ENCODE measurements at regions of chr22 and their contacts with region 1.

Region 1: GRCh38 chr22:24555157-24556039 is at the start of gene SNRPD3:
- DNase-seq: peak; percentile 99 to 100
- H3K4me3 ChIP-seq: peak within 1 kb of the TSS; percentile 81 to 93
- H3K27ac ChIP-seq: peak within 1 kb of the TSS; percentile 98 to 99
- H3K4me1 ChIP-seq: peaks cover 20 to 32% of the 10 kb centered on the region in 2 donors
- H3K27me3 ChIP-seq: no peaks in the 10 kb centered on the region
- CTCF ChIP-seq: no peak
- total RNA-seq, gene SNRPD3: 113 TPM

Region 2: DNA sequence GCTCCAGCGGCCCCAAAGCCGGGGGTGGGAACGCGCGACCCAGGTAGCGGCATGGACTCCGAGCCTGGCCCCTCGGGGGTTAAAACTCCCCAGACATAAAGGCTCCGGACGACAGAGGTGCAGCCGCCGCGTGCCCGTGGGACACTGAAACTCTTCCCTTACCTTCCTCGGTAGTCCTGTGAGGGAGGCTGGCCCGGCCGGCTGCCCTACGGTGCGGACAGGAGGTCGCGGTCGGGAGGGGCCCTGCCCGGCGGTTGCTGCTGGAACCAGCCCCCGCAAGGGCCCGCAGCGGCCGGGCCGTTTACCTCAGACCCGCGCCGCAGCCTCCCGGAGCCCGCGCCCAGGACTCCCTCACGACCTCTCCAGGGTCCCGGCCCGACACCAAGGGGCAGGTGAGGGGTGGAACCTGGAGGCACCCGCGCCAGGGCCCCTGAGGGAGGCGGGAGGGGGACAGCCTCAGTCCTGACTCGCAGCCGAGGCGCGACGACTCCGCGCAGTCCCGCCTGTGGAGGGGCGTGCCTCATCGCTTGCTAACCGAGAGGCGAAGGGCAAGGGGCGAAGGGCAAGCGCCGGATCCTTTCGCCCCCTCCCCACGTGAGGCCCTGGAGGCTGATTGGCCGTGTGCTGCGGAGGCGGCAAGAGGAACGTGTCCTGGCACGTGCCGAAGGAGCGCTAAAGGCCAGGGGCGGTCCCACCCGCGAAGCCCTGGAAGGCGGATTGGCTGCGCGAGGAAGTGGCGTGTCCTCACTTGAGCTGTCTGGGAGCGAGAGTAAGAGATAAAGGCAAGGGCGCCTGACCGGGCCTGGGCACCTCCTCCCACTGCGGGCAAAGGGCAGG is 60.7 kb before region 1 on chr22 and contains the start of gene UPB1:
- intact Hi-C with region 1: no loop called
- DNase-seq: no peak
- H3K4me3 ChIP-seq: peak within 1 kb of the TSS in 1 of 2 donors; percentile 53
- H3K27ac ChIP-seq: no peak within 1 kb of the TSS
- H3K4me1 ChIP-seq: no peaks in the 10 kb centered on the region
- H3K27me3 ChIP-seq: no peaks in the 10 kb centered on the region
- CTCF ChIP-seq: no peak
- total RNA-seq, gene UPB1: not detected

Region 3: DNA sequence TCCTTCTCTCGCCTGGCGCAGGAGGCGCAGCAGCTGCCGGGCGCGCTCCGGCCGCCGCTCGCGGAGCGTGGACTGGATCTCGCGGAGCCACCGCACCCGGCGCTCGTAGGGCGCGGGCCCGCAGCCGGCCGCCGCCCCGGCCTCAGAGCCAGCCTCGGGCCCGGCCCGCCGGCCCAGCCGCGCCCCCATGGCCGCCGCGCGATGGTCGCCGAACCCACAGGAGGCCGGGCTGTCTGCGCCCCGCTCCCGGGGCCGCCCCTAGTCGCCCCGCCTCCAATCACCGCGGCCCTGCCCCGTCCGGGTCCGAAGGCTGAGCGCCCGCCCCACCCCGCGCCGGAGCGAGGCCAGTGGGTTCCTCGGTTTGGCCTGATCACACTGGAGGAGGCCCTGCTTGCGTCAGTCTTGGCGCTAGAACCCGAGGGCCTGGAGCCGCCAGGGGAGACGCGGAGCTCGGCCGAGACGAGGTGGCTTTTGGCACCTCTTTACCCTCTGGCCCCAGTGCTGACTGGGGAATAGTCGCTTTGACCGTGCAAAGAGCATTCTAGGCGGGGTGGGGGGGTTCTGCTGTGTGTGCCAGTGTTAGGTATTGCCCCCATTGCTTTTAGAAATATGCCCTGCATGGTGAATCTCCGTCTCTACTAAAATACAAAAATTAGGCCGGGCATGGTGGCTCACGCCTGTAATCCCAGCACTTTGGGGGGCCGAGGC is 37.6 kb after region 1 on chr22 and contains the start of gene LRRC75B:
- intact Hi-C with region 1: loop called (anchors 2 kb)
- DNase-seq: peak; percentile 52 to 95
- H3K4me3 ChIP-seq: peak within 1 kb of the TSS; percentile 62 to 77
- H3K27ac ChIP-seq: peak within 1 kb of the TSS; percentile 72 to 83
- H3K4me1 ChIP-seq: peaks cover 6 to 7% of the 10 kb centered on the region in 2 donors
- H3K27me3 ChIP-seq: no peaks in the 10 kb centered on the region
- CTCF ChIP-seq: no peak
- total RNA-seq, gene LRRC75B: 22.7 TPM